ENCODE measurements at regions of chr17 and their contacts with region 1.

Region 1: DNA sequence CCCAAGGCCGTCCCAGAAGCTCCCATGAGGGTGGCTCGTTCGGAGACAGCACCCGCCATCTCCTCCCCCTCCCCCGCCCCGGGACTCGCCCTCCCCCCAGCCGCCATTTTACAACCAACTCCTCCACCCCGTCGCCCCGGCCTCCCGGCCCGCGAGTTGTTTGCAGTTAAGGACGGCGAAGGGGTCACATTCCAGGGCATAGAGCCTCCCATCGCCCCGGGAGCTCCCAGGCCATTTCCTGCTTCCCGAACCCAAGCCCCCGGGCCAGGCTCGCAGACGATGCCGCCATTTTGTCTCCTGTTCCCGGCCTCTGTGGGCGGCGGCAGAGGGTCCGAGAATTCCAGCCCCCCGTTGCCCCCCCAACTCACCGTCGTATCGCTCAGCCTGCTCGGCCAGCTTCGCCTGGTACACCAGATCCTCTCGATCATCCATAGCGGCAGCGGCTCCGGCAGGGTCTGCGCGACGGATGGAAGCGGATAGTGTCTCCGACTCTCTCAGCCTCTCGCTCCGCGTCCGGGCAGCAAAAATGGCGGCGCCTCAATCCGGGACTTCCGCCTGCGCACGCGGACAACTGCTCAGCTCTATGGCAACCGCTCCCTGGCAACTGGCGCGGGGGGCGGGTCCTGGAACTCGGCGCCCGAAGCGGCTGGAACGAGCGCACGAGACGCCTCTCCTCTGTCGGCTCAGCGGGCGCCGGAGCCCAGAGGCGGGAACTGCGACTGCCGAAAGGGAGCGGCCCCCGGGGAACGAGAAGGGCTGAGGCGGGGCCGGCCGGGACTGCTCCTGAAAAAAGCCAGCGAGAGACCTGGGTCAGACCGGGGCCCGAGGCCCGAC is at the start of gene YWHAE:
- DNase-seq: peak; percentile 99
- ATAC-seq: peak; percentile 95
- H3K4me3 Mint-ChIP-seq: peak within 1 kb of the TSS; percentile 100
- H3K27ac Mint-ChIP-seq: peak within 1 kb of the TSS; percentile 100
- H3K4me1 Mint-ChIP-seq: peaks cover 27% of the 10 kb centered on the region
- H3K27me3 Mint-ChIP-seq: no peaks in the 10 kb centered on the region
- total RNA-seq, gene YWHAE: 520 to 553 TPM

Region 2: GRCh38 chr17:1347589-1348323 is 52.1 kb before region 1 on chr17:
- CTCF ChIA-PET with region 1: no interaction called
- POLR2A ChIA-PET with region 1: interaction called, 4 read pairs
- intact Hi-C with region 1: loop called in 1 of 2 experiments (anchors 5 kb)
- DNase-seq: peak; percentile 23
- ATAC-seq: no peak
- H3K4me3 Mint-ChIP-seq: no peak overlapping the region
- H3K27ac Mint-ChIP-seq: peak overlapping the region; percentile 80
- H3K4me1 Mint-ChIP-seq: peaks cover 33% of the 10 kb centered on the region
- H3K27me3 Mint-ChIP-seq: no peaks in the 10 kb centered on the region

Region 3: DNA sequence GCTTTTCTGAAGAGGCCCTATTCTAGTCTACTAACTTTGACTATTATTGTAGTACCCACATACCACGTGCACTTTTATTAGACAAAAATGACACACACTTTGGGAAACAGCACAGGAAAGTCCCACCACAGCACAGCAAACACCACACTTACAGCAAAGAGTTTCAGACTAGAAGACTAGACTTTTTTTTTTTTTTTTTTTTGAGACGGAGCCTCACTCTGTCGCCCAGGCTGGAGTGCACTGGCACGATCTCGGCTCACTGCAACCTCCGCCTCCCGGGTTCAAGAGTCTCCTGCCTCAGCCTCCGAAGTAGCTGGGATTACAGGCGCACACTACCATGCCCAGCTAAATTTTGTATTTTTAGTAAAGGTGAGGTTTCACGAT is 20.0 kb before region 1 on chr17:
- CTCF ChIA-PET with region 1: interaction called, 6 read pairs
- POLR2A ChIA-PET with region 1: interaction called, 5 read pairs
- intact Hi-C with region 1: loop called (anchors 2 kb)
- DNase-seq: peak; percentile 53
- ATAC-seq: peak; percentile 83
- H3K4me3 Mint-ChIP-seq: no peak overlapping the region
- H3K27ac Mint-ChIP-seq: peak overlapping the region; percentile 77
- H3K4me1 Mint-ChIP-seq: peaks cover 77% of the 10 kb centered on the region
- H3K27me3 Mint-ChIP-seq: no peaks in the 10 kb centered on the region

Region 4: DNA sequence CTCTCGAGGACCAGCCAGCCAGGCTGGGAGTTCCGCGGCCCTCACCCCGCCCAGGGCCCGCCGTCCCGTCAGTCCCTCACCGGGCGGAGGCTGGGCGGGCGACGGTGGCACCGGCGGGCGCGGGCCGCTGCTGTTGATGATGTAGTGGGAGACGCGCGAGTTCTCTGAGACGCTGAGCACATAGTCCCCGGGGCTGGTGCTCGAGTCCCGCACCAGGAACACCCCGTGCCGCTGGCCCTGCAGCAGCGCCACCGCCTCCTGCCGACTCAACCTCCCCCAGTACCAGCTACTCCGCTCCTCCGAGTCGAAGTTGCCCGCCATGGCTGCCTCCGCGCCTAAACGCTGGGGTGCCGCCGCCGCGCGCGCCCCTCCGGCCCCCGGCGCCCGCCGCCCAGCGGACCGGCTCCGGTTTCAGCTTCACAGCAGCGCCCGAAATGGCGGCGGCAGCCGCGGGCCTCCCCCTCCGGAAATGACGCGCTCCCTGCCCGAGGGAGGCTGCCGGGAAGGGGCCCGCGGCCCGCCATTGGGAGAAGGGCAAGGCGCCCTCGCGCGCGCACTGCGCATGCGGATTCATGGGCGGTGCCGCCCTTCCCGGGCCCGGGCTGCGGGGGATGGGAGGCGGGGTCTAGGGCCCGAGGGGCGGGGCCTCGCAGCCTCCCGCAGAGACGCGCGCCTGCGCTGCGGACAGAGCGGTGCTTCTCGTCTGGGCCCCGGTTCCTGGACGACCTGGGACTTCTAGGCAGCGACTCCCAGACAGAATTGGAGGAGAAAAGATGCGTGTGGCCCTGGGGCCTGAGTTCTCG is 56.1 kb after region 1 on chr17 and contains the start of gene CRK:
- CTCF ChIA-PET with region 1: no interaction called
- POLR2A ChIA-PET with region 1: no interaction called
- intact Hi-C with region 1: loop called (anchors 1 to 2 kb)
- DNase-seq: peak; percentile 99
- ATAC-seq: peak; percentile 93
- H3K4me3 Mint-ChIP-seq: peak within 1 kb of the TSS; percentile 82
- H3K27ac Mint-ChIP-seq: peak within 1 kb of the TSS; percentile 89
- H3K4me1 Mint-ChIP-seq: peaks cover 46% of the 10 kb centered on the region
- H3K27me3 Mint-ChIP-seq: peaks cover 9% of the 10 kb centered on the region
- total RNA-seq, gene CRK: 10.1 to 11.6 TPM

Region 5: DNA sequence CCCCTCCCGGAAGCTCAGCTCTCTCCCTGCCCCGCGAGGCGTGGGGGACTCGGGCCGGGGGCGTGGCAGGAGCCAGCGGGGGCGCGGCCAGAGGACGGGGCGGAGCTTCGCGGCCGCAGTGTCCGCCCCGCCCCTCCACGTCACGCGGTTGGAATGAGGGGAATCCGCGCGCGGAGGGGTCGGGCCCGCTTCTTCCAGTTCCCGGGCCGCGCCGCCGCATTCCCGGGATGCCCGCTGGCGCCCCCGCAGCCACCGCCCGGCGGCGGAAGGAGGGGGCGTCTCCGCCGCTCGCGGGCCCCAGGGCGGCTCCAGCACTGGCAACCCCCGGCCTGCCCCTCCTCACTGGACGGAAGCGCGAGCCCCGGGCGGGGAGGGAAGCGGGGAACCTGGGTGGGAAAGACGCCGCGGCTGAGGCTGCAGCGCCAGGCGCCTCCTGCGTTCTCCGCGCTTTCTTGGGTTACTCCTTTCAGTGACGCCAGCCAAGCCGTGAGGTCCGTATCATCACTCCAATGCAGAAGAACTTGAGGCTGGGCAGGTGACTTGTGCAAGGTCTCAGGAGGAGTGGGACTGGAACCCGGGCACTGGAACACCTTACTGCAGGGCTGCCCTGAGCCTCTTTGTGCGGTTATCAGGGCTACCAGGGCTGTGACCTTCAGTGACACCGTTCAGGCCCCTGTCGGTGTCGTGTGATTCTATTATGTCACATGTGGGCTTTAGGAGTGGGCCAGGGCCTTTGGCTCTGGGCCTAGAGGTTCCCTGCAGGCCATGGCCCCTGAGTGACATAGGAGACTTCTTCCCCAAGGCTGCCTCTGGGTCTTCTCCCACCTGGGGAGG is 88.4 kb after region 1 on chr17:
- CTCF ChIA-PET with region 1: no interaction called
- POLR2A ChIA-PET with region 1: no interaction called
- intact Hi-C with region 1: loop called in 1 of 2 experiments (anchors 1 kb)
- DNase-seq: peak; percentile 77
- ATAC-seq: peak; percentile 10
- H3K4me3 Mint-ChIP-seq: peak overlapping the region; percentile 71
- H3K27ac Mint-ChIP-seq: no peak overlapping the region
- H3K4me1 Mint-ChIP-seq: peaks cover 42% of the 10 kb centered on the region
- H3K27me3 Mint-ChIP-seq: no peaks in the 10 kb centered on the region

Region 6: GRCh38 chr17:1561400-1562175 is 161.7 kb after region 1 on chr17:
- CTCF ChIA-PET with region 1: no interaction called
- POLR2A ChIA-PET with region 1: no interaction called
- intact Hi-C with region 1: loop called in 1 of 2 experiments (anchors 1 kb)
- DNase-seq: peak; percentile 64
- ATAC-seq: peak; percentile 35
- H3K4me3 Mint-ChIP-seq: peak overlapping the region; percentile 81
- H3K27ac Mint-ChIP-seq: no peak overlapping the region
- H3K4me1 Mint-ChIP-seq: peaks cover 27% of the 10 kb centered on the region
- H3K27me3 Mint-ChIP-seq: no peaks in the 10 kb centered on the region

Measured in activated CD4-positive, alpha-beta T cell treated with anti-CD3 and anti-CD28 coated beads for 36 hours (primary cell).